ENCODE measurements at regions of chr2 and their contacts with region 1.

Region 1: GRCh38 chr2:191245046-191245868 is at the start of gene MYO1B:
- DNase-seq: peak; percentile 87
- ATAC-seq: peak; percentile 87
- total RNA-seq, gene MYO1B: 18.9 TPM

Region 2: DNA sequence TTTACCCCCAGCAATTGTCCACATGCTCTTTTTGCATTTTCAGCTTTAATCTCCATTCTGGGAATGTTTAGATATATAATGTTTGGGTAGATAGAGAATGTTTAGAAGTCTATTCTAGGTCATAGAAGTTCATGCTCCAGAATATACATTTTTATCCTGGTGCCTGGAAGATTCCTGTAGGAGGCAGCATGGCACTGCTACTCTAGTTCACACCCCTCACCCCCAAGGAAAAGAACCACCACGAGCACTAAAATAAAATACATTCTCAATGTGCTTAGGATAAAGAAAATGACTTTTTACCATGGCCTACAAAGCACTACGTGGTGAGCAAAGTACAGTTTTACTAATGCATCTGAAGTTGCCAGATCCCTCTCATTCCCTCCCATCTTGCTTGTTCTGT is 53.8 kb after region 1 on chr2:
- intact Hi-C with region 1: loop called (anchors 5 kb)
- DNase-seq: no peak
- ATAC-seq: no peak

Region 3: GRCh38 chr2:191358318-191359025 is 113.2 kb after region 1 on chr2:
- intact Hi-C with region 1: no loop called
- DNase-seq: no peak
- ATAC-seq: peak; percentile 95

Region 4: DNA sequence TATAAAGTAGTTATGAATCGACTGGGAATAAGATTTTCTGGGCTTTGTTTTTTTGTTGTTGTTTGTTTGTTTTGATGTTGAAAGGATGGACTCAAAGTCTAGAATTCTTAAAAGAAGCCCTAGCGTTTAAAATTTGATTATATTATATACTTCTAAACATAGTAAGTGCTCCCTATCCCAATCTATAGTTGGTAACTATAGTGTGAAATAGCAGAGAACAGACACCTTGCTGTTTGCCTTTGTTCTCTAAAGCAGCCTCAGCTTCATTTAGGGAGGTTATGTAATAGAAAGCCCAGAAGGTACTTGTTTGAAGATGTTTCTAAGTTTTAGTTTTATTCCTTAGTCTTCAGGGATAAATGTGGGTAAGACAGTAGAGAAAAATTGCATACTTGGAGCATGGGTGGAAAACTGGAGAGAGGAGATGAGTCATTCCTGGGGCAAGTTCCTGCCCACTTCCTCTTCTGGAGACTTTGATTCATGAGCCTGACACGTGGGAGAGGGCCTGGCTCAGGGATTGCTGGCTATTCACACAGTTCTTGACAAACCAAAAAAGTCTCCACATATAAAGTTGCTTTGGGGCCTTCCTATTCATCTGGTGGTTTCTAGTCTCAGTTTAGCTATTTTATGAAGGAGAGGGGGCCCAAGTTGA is 131.8 kb after region 1 on chr2:
- intact Hi-C with region 1: loop called (anchors 5 kb)
- DNase-seq: peak; percentile 71
- ATAC-seq: peak; percentile 94